PC-3 (cell line): ENCODE measurements at regions of chr5 and their contacts with region 1.

Region 1: GRCh38 chr5:134225618-134226440 is at the start of gene PPP2CA:
- DNase-seq: peak; percentile 95
- ATAC-seq: peak; percentile 86
- H3K4me3 ChIP-seq: peak within 1 kb of the TSS; percentile 100
- H3K27ac ChIP-seq: peak within 1 kb of the TSS; percentile 96
- H3K4me1 ChIP-seq: peaks cover 22% of the 10 kb centered on the region
- H3K27me3 ChIP-seq: no peaks in the 10 kb centered on the region
- CTCF ChIP-seq: no peak
- total RNA-seq, gene PPP2CA: 184 and 292 TPM in 2 replicates

Region 2: GRCh38 chr5:134176511-134177368 is 49.1 kb before region 1 on chr5 and contains the start of gene SKP1:
- CTCF ChIA-PET with region 1: no interaction called
- POLR2A ChIA-PET with region 1: interaction called, 3 read pairs
- intact Hi-C with region 1: loop called (anchors 2 kb)
- DNase-seq: peak; percentile 72
- ATAC-seq: peak; percentile 69
- H3K4me3 ChIP-seq: peak within 1 kb of the TSS; percentile 94
- H3K27ac ChIP-seq: peak within 1 kb of the TSS; percentile 92
- H3K4me1 ChIP-seq: peaks cover 16% of the 10 kb centered on the region
- H3K27me3 ChIP-seq: no peaks in the 10 kb centered on the region
- CTCF ChIP-seq: no peak
- total RNA-seq, gene SKP1: 197 and 220 TPM in 2 replicates

Region 3: GRCh38 chr5:134245101-134245604 is 19.3 kb after region 1 on chr5:
- CTCF ChIA-PET with region 1: interaction called, 3 read pairs
- POLR2A ChIA-PET with region 1: interaction called, 16 read pairs
- intact Hi-C with region 1: loop called (anchors 1 kb)
- DNase-seq: peak; percentile 93
- ATAC-seq: peak; percentile 82
- H3K4me3 ChIP-seq: peak overlapping the region; percentile 65
- H3K27ac ChIP-seq: peak overlapping the region; percentile 86
- H3K4me1 ChIP-seq: peaks cover 47% of the 10 kb centered on the region
- H3K27me3 ChIP-seq: no peaks in the 10 kb centered on the region
- CTCF ChIP-seq: no peak

Region 4: DNA sequence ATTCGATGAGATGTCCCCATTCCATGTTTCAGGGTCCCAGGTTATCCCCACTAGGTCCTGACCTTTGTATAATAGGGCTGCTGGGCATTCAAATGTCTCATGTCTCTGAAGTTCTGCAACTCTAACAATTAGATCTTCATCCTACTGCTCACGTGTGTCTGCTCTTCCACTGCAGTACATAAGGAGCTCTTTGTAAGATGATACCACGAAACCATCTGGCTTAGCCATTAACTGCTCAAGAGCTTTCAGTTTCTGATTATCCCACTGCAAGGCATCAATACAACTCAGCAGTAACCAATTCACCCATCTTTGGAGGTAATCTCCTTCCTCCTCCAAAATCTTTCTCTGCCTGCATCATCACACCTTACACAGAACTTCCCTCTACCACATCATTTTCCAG is 50.0 kb after region 1 on chr5:
- CTCF ChIA-PET with region 1: no interaction called
- POLR2A ChIA-PET with region 1: interaction called, 5 read pairs
- intact Hi-C with region 1: loop called (anchors 2 kb)
- DNase-seq: no peak
- ATAC-seq: no peak
- H3K4me3 ChIP-seq: no peak overlapping the region
- H3K27ac ChIP-seq: no peak overlapping the region
- H3K4me1 ChIP-seq: peaks cover 14% of the 10 kb centered on the region
- H3K27me3 ChIP-seq: no peaks in the 10 kb centered on the region
- CTCF ChIP-seq: no peak

Region 5: DNA sequence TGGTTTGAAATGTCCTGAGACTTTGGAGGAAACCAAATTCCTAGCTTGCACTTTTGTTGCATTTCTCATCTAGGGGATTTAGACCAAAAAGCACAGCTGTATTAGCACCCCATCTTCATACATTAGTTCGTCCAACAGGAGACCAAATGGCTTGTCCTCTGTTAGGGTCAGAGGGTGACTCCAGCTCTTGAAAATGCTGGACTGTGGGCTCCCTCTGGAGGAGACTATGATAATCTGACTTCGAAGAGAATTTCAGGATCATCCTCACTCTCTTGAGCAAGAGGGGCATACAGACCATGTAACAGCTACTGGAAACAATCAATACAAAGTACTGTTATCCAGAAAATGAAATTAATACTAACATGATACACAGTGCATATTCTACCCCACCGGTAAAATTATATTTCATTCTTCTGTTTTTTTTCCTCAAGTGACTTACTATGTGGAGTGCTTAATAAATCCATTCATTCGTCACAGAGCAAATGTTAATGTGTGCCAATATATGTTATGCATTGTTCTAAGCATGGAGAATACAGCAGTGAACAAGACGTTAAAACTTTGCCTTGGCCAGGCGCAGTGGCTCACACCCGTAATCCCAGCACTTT is 63.8 kb after region 1 on chr5:
- CTCF ChIA-PET with region 1: no interaction called
- POLR2A ChIA-PET with region 1: no interaction called
- intact Hi-C with region 1: loop called (anchors 1 kb)
- DNase-seq: peak; percentile 75
- ATAC-seq: peak; percentile 89
- H3K4me3 ChIP-seq: no peak overlapping the region
- H3K27ac ChIP-seq: no peak overlapping the region
- H3K4me1 ChIP-seq: no peaks in the 10 kb centered on the region
- H3K27me3 ChIP-seq: no peaks in the 10 kb centered on the region
- CTCF ChIP-seq: peak; percentile 79

Region 6: DNA sequence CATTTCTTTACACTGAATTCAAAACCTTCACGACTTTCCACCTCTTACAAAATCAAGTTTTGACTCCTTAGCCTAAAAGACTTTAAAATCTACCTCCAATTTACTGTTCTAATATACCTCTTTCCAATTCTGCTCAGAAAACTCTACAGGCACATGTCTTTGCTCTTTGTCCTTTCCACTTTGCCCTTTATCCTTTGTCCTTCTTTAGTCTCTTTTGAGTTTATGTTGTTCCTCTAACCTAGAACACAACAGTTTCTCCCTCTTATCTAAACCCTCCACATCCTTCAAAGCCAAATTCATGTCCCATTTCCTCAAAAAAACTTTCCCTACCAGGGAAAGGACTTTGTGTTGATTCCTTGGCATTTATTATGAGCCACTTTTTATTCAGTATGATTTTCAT is 139.8 kb after region 1 on chr5:
- CTCF ChIA-PET with region 1: no interaction called
- POLR2A ChIA-PET with region 1: no interaction called
- intact Hi-C with region 1: no loop called
- DNase-seq: no peak
- ATAC-seq: no peak
- H3K4me3 ChIP-seq: no peak overlapping the region
- H3K27ac ChIP-seq: no peak overlapping the region
- H3K4me1 ChIP-seq: peaks cover 17% of the 10 kb centered on the region
- H3K27me3 ChIP-seq: no peaks in the 10 kb centered on the region
- CTCF ChIP-seq: no peak